B cell (primary cell): ENCODE measurements at regions of chr20 and their contacts with region 1.

Region 1: GRCh38 chr20:5642155-5642981 is 107.8 kb upstream of the SHLD1 start:
- DNase-seq: no peak
- ATAC-seq: no peak
- H3K4me3 ChIP-seq: peak overlapping the region in 1 of 5 experiments; percentile 36
- H3K4me3 Mint-ChIP-seq: peak overlapping the region; percentile 12
- H3K27ac ChIP-seq: peak overlapping the region; percentile 1 to 42
- H3K27ac Mint-ChIP-seq: peak overlapping the region; percentile 69
- H3K4me1 ChIP-seq: peaks cover 56% of the 10 kb centered on the region in 2 donors
- H3K4me1 Mint-ChIP-seq: peaks cover 46% of the 10 kb centered on the region
- H3K27me3 ChIP-seq: no peaks in the 10 kb centered on the region
- H3K27me3 Mint-ChIP-seq: no peaks in the 10 kb centered on the region
- CTCF ChIP-seq: no peak

Region 2: DNA sequence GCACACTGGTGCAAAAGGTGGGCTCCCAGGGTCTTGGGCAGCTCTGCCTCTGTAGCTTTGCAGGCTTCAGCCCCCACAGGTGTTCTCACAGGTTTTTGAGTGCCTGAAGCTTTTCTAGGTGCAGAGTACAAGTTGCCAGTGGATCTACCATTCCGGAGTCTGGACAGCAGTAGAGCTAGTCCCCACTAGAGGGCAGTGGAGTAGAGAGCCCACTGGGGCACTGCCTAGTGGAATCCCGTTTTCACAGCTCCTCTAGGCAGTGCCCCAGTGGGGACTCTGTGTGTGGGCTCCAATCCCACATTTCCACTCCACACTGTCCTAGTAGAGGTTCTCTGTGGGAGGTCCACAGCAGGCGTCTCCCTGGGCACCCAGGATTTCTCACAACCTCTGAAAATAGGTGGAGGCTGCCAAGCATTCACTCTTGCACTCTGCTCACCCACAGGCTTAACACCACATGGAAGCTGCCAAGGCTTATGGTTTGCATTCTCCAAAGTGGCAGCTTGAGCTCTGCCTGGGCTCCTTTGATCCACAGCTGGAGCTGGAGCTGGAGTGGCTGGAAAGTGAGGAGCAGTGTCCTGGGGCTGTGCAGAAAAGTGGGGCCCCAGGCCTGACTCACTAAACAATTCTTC is 239.4 kb before region 1 on chr20:
- CTCF ChIA-PET with region 1: no interaction called
- POLR2A ChIA-PET with region 1: no interaction called
- intact Hi-C with region 1: no loop called
- DNase-seq: no peak
- ATAC-seq: no peak
- H3K4me3 ChIP-seq: no peak overlapping the region
- H3K4me3 Mint-ChIP-seq: no peak overlapping the region
- H3K27ac ChIP-seq: no peak overlapping the region
- H3K27ac Mint-ChIP-seq: no peak overlapping the region
- H3K4me1 ChIP-seq: no peaks in the 10 kb centered on the region
- H3K4me1 Mint-ChIP-seq: no peaks in the 10 kb centered on the region
- H3K27me3 ChIP-seq: no peaks in the 10 kb centered on the region
- H3K27me3 Mint-ChIP-seq: peaks cover 15% of the 10 kb centered on the region
- CTCF ChIP-seq: no peak

Region 3: DNA sequence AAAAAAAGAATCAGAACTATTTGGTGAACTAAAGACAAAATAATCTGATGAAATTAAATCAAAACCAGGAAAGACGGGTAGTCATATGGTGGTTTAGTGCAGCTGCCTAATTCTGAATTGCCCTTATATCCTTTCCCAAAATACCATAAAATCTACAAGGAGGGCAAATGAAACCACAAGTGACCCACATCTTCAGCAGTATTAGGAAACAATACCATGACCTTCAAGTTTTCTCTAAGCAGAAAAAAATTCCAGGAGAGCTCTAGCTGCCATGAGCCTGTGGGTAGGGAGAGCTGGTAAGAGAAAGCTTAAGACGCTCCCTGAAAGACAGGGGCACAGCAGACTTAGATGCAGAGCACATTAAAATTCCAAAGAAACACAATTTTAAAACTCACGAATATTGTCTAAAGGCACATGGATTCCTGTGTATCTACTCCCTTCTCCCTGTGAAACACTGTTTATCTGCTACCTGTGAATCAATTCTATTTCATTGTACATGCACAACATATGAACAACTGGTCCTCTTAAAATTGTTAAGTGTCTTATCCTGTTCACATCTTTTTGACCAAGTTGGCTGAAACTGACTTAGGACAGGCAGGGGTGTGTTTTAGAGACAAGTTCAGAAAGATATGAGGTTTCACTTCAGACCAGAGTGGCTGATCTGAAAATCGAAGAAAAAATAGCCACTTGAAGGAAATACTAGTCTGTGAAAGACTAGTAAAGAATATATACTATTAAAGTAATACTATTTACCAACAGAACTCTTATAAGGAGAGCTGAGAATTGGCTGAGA is 45.8 kb before region 1 on chr20:
- CTCF ChIA-PET with region 1: interaction called, 3 read pairs
- POLR2A ChIA-PET with region 1: interaction called, 10 read pairs
- intact Hi-C with region 1: no loop called
- DNase-seq: no peak
- ATAC-seq: no peak
- H3K4me3 ChIP-seq: no peak overlapping the region
- H3K4me3 Mint-ChIP-seq: no peak overlapping the region
- H3K27ac ChIP-seq: peak overlapping the region in 1 of 2 donors; percentile 12
- H3K27ac Mint-ChIP-seq: peak overlapping the region; percentile 62
- H3K4me1 ChIP-seq: peaks cover 16 to 18% of the 10 kb centered on the region in 2 donors
- H3K4me1 Mint-ChIP-seq: peaks cover 58% of the 10 kb centered on the region
- H3K27me3 ChIP-seq: no peaks in the 10 kb centered on the region
- H3K27me3 Mint-ChIP-seq: no peaks in the 10 kb centered on the region
- CTCF ChIP-seq: no peak

Region 4: GRCh38 chr20:5658912-5659345 is 16.6 kb after region 1 on chr20:
- CTCF ChIA-PET with region 1: interaction called, 31 read pairs
- POLR2A ChIA-PET with region 1: interaction called, 23 read pairs
- intact Hi-C with region 1: loop called (anchors 1 kb)
- DNase-seq: peak; percentile 94
- ATAC-seq: peak; percentile 78
- H3K4me3 ChIP-seq: no peak overlapping the region
- H3K4me3 Mint-ChIP-seq: peak overlapping the region; percentile 71
- H3K27ac ChIP-seq: peak overlapping the region; percentile 61 to 75
- H3K27ac Mint-ChIP-seq: peak overlapping the region; percentile 91
- H3K4me1 ChIP-seq: peaks cover 44 to 60% of the 10 kb centered on the region in 2 donors
- H3K4me1 Mint-ChIP-seq: peaks cover 58% of the 10 kb centered on the region
- H3K27me3 ChIP-seq: no peaks in the 10 kb centered on the region
- H3K27me3 Mint-ChIP-seq: no peaks in the 10 kb centered on the region
- CTCF ChIP-seq: no peak

Region 5: GRCh38 chr20:5691918-5692618 is 49.7 kb after region 1 on chr20:
- CTCF ChIA-PET with region 1: interaction called, 5 read pairs
- POLR2A ChIA-PET with region 1: interaction called, 7 read pairs
- intact Hi-C with region 1: loop called (anchors 1 kb)
- DNase-seq: peak; percentile 83
- ATAC-seq: peak; percentile 100
- H3K4me3 ChIP-seq: peak overlapping the region in 1 of 5 experiments; percentile 14
- H3K4me3 Mint-ChIP-seq: peak overlapping the region; percentile 69
- H3K27ac ChIP-seq: peak overlapping the region in 1 of 2 donors; percentile 25
- H3K27ac Mint-ChIP-seq: peak overlapping the region; percentile 86
- H3K4me1 ChIP-seq: peaks cover 30 to 40% of the 10 kb centered on the region in 2 donors
- H3K4me1 Mint-ChIP-seq: peaks cover 18% of the 10 kb centered on the region
- H3K27me3 ChIP-seq: no peaks in the 10 kb centered on the region
- H3K27me3 Mint-ChIP-seq: no peaks in the 10 kb centered on the region
- CTCF ChIP-seq: no peak

Region 6: GRCh38 chr20:5871459-5872410 is 229.4 kb after region 1 on chr20:
- CTCF ChIA-PET with region 1: no interaction called
- POLR2A ChIA-PET with region 1: no interaction called
- intact Hi-C with region 1: no loop called
- DNase-seq: no peak
- ATAC-seq: no peak
- H3K4me3 ChIP-seq: no peak overlapping the region
- H3K4me3 Mint-ChIP-seq: no peak overlapping the region
- H3K27ac ChIP-seq: no peak overlapping the region
- H3K27ac Mint-ChIP-seq: no peak overlapping the region
- H3K4me1 ChIP-seq: no peaks in the 10 kb centered on the region
- H3K4me1 Mint-ChIP-seq: no peaks in the 10 kb centered on the region
- H3K27me3 ChIP-seq: peaks cover 0 to 4% (median 0%) of the 10 kb centered on the region in 4 experiments
- H3K27me3 Mint-ChIP-seq: peaks cover 28% of the 10 kb centered on the region
- CTCF ChIP-seq: no peak